ENCODE measurements at regions of chr12 and their contacts with region 1.

Region 1: DNA sequence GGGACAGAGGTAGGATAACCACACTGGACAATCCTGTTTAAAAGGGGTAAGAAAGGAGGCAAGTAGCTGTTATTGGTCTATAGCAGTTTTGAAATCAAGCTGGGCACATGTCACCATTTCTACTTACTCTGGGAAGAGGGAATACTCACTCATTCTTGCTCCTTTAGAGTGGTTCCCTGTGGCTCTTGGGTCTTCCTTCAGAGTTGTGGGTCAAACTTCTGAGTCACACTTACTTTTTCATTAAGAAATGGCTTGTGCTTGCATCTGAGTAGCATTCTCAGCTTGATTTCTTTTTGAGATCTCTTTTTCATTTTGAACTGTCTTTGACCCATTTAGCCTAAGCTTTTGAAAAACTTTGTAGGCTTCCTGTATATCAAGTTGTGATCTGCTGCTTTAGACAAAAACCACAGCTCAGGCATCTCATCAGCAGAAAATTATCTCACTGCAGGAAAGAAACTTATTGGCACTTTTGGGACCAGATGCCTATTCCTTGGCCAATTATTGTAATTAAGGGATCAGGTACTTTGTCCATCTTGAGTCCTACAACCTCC is 122.2 kb downstream of the AEBP2 start:
- DNase-seq: no peak

Region 2: DNA sequence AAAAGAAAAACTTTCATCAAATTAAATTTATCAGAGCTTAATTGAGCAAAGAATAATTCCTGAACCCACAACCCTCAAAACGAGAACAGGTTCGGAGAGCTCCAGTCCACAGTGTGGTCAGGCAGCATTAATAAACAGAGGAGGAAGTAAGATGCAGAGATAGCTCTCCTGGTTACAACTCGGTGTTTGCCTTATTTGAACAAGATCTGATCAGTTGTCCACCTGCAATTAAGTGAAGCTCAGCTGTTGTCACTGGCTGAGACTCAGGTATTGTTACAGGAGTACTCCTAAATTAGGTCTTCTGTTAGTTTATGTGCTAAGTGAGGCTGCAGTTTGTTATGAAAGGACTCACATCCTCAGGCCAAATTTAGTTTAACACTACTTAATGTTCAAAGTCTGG is 355.5 kb after region 1 on chr12:
- CTCF ChIA-PET with region 1: interaction called, 14 read pairs
- POLR2A ChIA-PET with region 1: no interaction called
- DNase-seq: no peak